ENCODE measurements at regions of chr7 and their contacts with region 1.

Region 1: DNA sequence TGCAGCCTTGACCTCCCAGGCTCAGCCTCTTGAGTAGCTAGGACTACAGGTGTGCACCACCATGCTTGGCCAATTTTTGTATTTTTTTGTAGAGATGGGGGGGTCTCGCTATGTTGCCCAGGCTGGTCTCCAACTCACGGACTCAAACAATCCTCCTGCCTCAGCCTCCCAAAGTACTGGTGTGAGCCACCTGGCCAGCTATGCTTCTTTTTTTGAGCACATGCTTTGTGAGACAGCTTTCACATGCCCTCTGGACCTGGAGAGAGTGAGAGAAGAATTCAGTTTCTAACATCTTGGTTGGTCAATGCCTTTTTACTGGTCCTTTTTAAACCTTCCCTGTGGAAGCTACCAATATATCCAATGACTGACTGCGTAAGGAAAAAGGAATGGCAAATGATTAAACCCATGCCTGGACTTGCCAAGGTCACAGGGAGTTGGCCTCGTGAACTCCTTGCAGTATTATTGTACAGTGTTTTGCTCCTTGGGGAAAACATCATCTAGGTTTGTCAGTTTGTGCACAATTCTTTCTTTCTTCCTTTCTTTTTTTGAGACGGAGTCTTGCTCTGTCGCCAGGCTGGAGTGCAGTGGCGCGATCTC is 6.2 kb upstream of the FOXK1 start:
- DNase-seq: no peak
- ATAC-seq: no peak
- H3K4me3 ChIP-seq: no peak overlapping the region
- H3K27ac ChIP-seq: no peak overlapping the region
- H3K4me1 ChIP-seq: no peaks in the 10 kb centered on the region
- H3K27me3 ChIP-seq: no peaks in the 10 kb centered on the region
- CTCF ChIP-seq: no peak

Region 2: GRCh38 chr7:4621401-4622145 is 54.3 kb before region 1 on chr7:
- intact Hi-C with region 1: no loop called
- DNase-seq: no peak
- ATAC-seq: no peak
- H3K4me3 ChIP-seq: no peak overlapping the region
- H3K27ac ChIP-seq: no peak overlapping the region
- H3K4me1 ChIP-seq: peaks cover 0 to 41% (median 13%) of the 10 kb centered on the region in 9 donors
- H3K27me3 ChIP-seq: peaks cover 0 to 3% (median 0%) of the 10 kb centered on the region in 7 donors
- CTCF ChIP-seq: no peak

Region 3: GRCh38 chr7:4641667-4642467 is 34.0 kb before region 1 on chr7:
- intact Hi-C with region 1: loop called in 6 of 10 experiments (anchors 1 to 5 kb)
- DNase-seq: peak; percentile 94 to 97
- ATAC-seq: peak; percentile 96 to 98 (median 97)
- H3K4me3 ChIP-seq: peak overlapping the region; percentile 15 to 78 (median 64)
- H3K27ac ChIP-seq: peak overlapping the region; percentile 37 to 95 (median 86)
- H3K4me1 ChIP-seq: peaks cover 0 to 16% (median 10%) of the 10 kb centered on the region in 9 donors
- H3K27me3 ChIP-seq: no peaks in the 10 kb centered on the region
- CTCF ChIP-seq: peak; percentile 17 to 81 (median 41)

Region 4: GRCh38 chr7:4973728-4974198 is 297.9 kb after region 1 on chr7:
- intact Hi-C with region 1: loop called in 1 of 10 experiments (anchors 5 kb)
- DNase-seq: peak; percentile 88 to 92
- ATAC-seq: peak; percentile 96 to 99 (median 98)
- H3K4me3 ChIP-seq: peak overlapping the region; percentile 73 to 92 (median 88)
- H3K27ac ChIP-seq: peak overlapping the region; percentile 60 to 92 (median 86)
- H3K4me1 ChIP-seq: peaks cover 0 to 20% (median 13%) of the 10 kb centered on the region in 9 donors
- H3K27me3 ChIP-seq: no peaks in the 10 kb centered on the region
- CTCF ChIP-seq: peak; percentile 71 to 95 (median 83)